Calu3 (cell line): ENCODE measurements at regions of chr9 and their contacts with region 1.

Region 1: GRCh38 chr9:69672596-69673310 is 582 bp upstream of the APBA1 start:
- DNase-seq: peak; percentile 83
- H3K4me3 Mint-ChIP-seq: peak overlapping the region; percentile 73
- H3K27ac Mint-ChIP-seq: no peak overlapping the region
- H3K4me1 Mint-ChIP-seq: peaks cover 18% of the 10 kb centered on the region
- H3K27me3 Mint-ChIP-seq: no peaks in the 10 kb centered on the region
- CTCF ChIP-seq: peak; percentile 69

Region 2: GRCh38 chr9:69421908-69422801 is 250.6 kb before region 1 on chr9:
- CTCF ChIA-PET with region 1: interaction called, 9 read pairs
- intact Hi-C with region 1: loop called (anchors 5 kb)
- DNase-seq: peak; percentile 61
- H3K4me3 Mint-ChIP-seq: no peak overlapping the region
- H3K27ac Mint-ChIP-seq: peak overlapping the region; percentile 47
- H3K4me1 Mint-ChIP-seq: peaks cover 10% of the 10 kb centered on the region
- H3K27me3 Mint-ChIP-seq: no peaks in the 10 kb centered on the region
- CTCF ChIP-seq: peak; percentile 60

Region 3: GRCh38 chr9:69549310-69550202 is 123.2 kb before region 1 on chr9:
- CTCF ChIA-PET with region 1: no interaction called
- intact Hi-C with region 1: loop called (anchors 10 kb)
- DNase-seq: peak; percentile 30
- H3K4me3 Mint-ChIP-seq: no peak overlapping the region
- H3K27ac Mint-ChIP-seq: no peak overlapping the region
- H3K4me1 Mint-ChIP-seq: peaks cover 38% of the 10 kb centered on the region
- H3K27me3 Mint-ChIP-seq: no peaks in the 10 kb centered on the region
- CTCF ChIP-seq: peak; percentile 29

Region 4: GRCh38 chr9:69818750-69819345 is 146.1 kb after region 1 on chr9:
- CTCF ChIA-PET with region 1: no interaction called
- intact Hi-C with region 1: loop called (anchors 10 kb)
- DNase-seq: no peak
- H3K4me3 Mint-ChIP-seq: no peak overlapping the region
- H3K27ac Mint-ChIP-seq: no peak overlapping the region
- H3K4me1 Mint-ChIP-seq: peaks cover 9% of the 10 kb centered on the region
- H3K27me3 Mint-ChIP-seq: no peaks in the 10 kb centered on the region
- CTCF ChIP-seq: no peak

Region 5: GRCh38 chr9:69877854-69878514 is 205.2 kb after region 1 on chr9:
- CTCF ChIA-PET with region 1: no interaction called
- intact Hi-C with region 1: loop called (anchors 5 kb)
- DNase-seq: no peak
- H3K4me3 Mint-ChIP-seq: no peak overlapping the region
- H3K27ac Mint-ChIP-seq: peak overlapping the region; percentile 11
- H3K4me1 Mint-ChIP-seq: peaks cover 13% of the 10 kb centered on the region
- H3K27me3 Mint-ChIP-seq: no peaks in the 10 kb centered on the region
- CTCF ChIP-seq: peak; percentile 40

Region 6: GRCh38 chr9:69919461-69920061 is 246.8 kb after region 1 on chr9:
- CTCF ChIA-PET with region 1: no interaction called
- intact Hi-C with region 1: loop called (anchors 10 kb)
- DNase-seq: no peak
- H3K4me3 Mint-ChIP-seq: no peak overlapping the region
- H3K27ac Mint-ChIP-seq: no peak overlapping the region
- H3K4me1 Mint-ChIP-seq: no peaks in the 10 kb centered on the region
- H3K27me3 Mint-ChIP-seq: no peaks in the 10 kb centered on the region
- CTCF ChIP-seq: peak; percentile 50

Region 7: DNA sequence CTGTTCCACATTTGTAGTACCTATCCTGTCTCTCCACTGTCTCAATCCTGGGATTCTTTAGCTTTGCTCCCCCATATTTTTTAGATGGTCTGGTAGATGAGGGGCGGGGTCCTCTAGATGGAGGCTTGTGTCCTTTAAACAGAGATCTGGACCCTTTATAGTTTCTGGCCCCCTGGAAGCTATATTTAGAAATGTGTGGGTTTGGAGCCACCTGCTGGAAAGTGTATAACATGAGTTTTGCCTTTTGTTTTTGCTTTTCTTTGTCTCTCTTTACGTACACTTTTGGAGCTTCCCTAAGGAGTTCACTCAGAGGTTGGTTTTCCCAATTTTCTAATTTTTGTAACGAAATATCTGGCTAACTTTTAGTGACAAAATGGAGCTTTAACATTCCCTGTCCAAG is 258.6 kb after region 1 on chr9:
- CTCF ChIA-PET with region 1: no interaction called
- intact Hi-C with region 1: loop called (anchors 2 kb)
- DNase-seq: no peak
- H3K4me3 Mint-ChIP-seq: no peak overlapping the region
- H3K27ac Mint-ChIP-seq: no peak overlapping the region
- H3K4me1 Mint-ChIP-seq: no peaks in the 10 kb centered on the region
- H3K27me3 Mint-ChIP-seq: no peaks in the 10 kb centered on the region
- CTCF ChIP-seq: peak; percentile 42